ENCODE measurements at regions of chr9 and their contacts with region 1.

Region 1: DNA sequence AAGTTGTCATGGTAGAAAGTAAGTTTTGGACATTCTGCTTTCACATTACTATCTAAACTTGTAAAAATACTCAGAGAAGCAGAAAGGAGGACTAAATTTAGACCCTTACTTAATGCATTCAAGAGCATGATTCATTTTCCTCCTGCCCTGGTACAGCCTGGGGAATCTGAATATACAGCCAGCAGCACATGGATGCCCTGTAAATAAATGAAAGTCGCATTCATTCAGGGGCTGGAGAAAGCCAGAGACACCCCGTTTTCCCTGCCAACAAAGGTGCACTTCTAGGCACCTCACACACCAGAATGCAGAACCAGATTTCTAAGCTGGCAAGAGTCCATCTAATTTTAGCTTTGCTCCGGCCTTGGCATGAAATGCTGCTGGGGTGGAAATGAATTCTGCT is 172.7 kb upstream of the KLF9 start:
- DNase-seq: peak in 1 of 2 donors; percentile 78
- H3K4me3 ChIP-seq: no peak overlapping the region
- H3K27ac ChIP-seq: peak overlapping the region; percentile 91 to 93
- H3K4me1 ChIP-seq: peaks cover 10 to 54% of the 10 kb centered on the region in 2 donors
- H3K27me3 ChIP-seq: no peaks in the 10 kb centered on the region
- CTCF ChIP-seq: peak in 1 of 3 experiments; percentile 6

Region 2: DNA sequence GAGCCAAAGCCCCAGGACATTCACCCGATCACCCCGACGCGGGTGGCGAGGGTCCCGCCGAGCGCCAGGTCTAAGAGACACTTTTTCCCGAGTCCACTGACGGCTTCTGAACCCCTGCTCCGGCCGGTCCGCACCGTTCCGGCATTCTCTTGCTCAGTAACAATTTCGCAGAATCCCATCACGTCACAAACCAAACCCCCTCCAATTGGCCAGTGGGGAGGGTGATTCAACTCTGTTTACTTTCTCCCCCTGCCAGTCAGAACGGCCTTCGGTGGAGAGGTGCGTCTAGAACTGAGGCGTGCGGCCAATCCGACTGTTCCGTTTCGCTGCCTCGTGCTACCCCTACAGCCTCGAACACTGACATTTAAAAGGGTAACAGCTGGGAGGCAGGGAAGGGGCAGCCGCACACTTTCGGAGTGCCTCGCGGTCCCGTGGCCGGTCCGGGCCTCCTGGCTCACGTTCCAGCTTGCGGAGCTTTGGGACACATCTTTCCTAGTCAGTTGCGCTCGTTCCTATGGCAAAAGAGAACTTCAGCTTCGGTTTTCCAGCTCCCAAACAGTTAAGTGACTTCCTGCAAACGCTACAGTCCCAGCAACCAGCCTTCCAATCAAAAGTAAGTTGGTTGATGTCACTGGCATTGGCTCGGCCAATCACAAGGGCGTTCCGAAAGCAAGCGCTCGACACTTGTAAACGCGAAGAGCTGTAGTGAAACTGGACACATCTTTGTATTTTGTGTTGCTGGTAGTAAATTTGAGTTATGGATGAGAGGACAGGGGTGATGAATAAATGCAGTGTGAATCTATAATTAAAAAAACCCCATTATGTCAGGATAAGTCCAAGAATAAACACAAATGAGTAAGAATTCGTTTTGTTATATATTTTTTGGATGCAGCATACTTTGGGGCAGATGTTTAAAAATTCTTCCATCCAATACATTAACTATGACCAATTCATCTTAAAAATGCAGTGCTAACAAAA is 173.1 kb before region 1 on chr9 and contains the start of gene KLF9:
- intact Hi-C with region 1: loop called (anchors 5 kb)
- DNase-seq: peak; percentile 95 to 98
- H3K4me3 ChIP-seq: peak within 1 kb of the TSS; percentile 92 to 94
- H3K27ac ChIP-seq: peak within 1 kb of the TSS; percentile 100
- H3K4me1 ChIP-seq: peaks cover 5 to 37% of the 10 kb centered on the region in 2 donors
- H3K27me3 ChIP-seq: no peaks in the 10 kb centered on the region
- CTCF ChIP-seq: no peak
- total RNA-seq, gene KLF9: 98.7 TPM

Region 3: GRCh38 chr9:70419546-70420266 is 167.5 kb before region 1 on chr9:
- intact Hi-C with region 1: loop called (anchors 1 kb)
- DNase-seq: peak; percentile 93 to 98
- H3K4me3 ChIP-seq: peak overlapping the region; percentile 54 to 75
- H3K27ac ChIP-seq: peak overlapping the region; percentile 100
- H3K4me1 ChIP-seq: peaks cover 14 to 43% of the 10 kb centered on the region in 2 donors
- H3K27me3 ChIP-seq: no peaks in the 10 kb centered on the region
- CTCF ChIP-seq: peak in 2 of 3 experiments; percentile 9 to 17

Region 4: GRCh38 chr9:70504834-70505233 is 82.4 kb before region 1 on chr9:
- intact Hi-C with region 1: loop called (anchors 2 kb)
- DNase-seq: no peak
- H3K4me3 ChIP-seq: no peak overlapping the region
- H3K27ac ChIP-seq: peak overlapping the region; percentile 77 to 82
- H3K4me1 ChIP-seq: peaks cover 0 to 46% of the 10 kb centered on the region in 2 donors
- H3K27me3 ChIP-seq: no peaks in the 10 kb centered on the region
- CTCF ChIP-seq: no peak

Region 5: DNA sequence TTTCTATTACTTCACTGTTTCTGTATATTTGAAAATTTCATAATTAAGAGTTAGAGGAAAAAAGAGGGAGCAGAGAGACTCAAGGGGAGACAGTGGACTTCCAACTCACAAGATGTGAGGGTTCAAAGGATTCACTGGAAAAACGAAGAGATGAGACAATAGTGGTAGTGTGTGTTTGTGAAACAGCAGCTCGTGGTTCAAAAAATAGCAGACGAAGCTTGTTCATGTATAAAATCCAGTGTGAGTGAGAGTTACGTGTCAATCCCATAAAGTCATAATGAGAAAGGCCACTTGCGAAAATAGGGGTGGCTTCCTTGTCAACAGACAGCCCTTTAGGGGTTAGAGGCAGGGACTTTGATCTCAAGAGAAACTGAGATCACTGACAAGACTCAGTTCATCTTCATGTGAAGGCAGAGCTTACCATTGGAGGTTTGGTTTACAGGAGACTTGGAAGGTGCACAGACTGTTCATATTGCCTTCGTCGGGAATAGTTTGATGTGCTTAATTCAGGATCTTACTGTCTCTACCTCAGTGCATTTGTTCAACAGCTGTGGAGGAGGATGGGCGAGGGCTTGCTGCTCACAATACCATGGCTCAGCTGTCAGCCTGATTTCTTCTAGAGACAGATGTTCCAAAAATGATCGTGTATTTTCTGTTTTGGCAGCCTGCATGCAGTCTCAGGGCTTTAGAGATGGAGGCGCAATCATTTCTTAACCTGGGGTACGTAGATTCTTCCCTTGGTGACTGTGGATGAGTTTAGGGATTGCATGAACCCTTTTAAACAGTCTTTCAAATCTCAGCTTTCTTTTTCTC is 67.1 kb before region 1 on chr9:
- intact Hi-C with region 1: no loop called
- DNase-seq: no peak
- H3K4me3 ChIP-seq: no peak overlapping the region
- H3K27ac ChIP-seq: no peak overlapping the region
- H3K4me1 ChIP-seq: no peaks in the 10 kb centered on the region
- H3K27me3 ChIP-seq: no peaks in the 10 kb centered on the region
- CTCF ChIP-seq: no peak

Measured in ascending aorta (tissue), 2 donors.